Esophagus squamous epithelium (tissue), 5 donors: ENCODE measurements at regions of chr4 and their contacts with region 1.

Region 1: DNA sequence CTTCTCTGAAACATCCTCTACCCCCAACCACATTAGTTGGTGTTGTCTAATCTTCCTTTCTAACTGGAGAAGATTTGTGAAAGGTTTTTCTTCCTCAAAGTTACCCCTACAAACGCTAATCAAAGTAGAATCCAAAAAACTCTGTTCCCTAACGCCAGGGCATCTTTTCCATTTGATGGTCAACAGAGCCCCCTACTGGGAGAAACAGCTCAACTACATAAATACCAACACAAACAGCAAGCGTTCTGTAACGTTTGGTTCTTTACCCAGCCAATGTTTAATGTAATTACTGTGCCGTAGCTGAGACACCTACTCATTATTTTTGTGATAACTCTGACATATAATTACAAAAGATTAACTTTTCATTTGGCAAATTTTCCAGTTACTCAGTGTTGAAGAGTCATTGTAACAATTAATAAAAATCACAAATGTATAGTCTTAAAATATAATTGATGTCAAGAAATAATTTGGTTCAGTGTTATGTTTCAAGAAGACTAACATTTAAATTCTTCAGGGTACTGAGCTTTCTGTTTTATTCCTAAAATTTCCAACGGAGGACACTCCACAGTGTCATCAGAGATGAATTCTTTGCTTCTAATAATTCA is 94.9 kb upstream of the TBC1D9 start:
- DNase-seq: no peak
- H3K4me3 ChIP-seq: no peak overlapping the region
- H3K27ac ChIP-seq: no peak overlapping the region
- H3K4me1 ChIP-seq: peaks cover 3 to 26% (median 8%) of the 10 kb centered on the region in 3 donors
- H3K27me3 ChIP-seq: no peaks in the 10 kb centered on the region
- CTCF ChIP-seq: peak; percentile 52 to 89 (median 76)
- POLR2A ChIP-seq: no peak

Region 2: GRCh38 chr4:140523857-140524742 is 327.0 kb before region 1 on chr4 and contains the start of gene ELMOD2:
- intact Hi-C with region 1: loop called (anchors 10 kb)
- DNase-seq: peak; percentile 92
- H3K4me3 ChIP-seq: peak within 1 kb of the TSS; percentile 80 to 89 (median 84)
- H3K27ac ChIP-seq: peak within 1 kb of the TSS; percentile 83 to 91 (median 86)
- H3K4me1 ChIP-seq: peaks cover 0 to 23% (median 11%) of the 10 kb centered on the region in 3 donors
- H3K27me3 ChIP-seq: no peaks in the 10 kb centered on the region
- CTCF ChIP-seq: peak; percentile 84 to 94 (median 91)
- POLR2A ChIP-seq: peak in 2 of 4 donors; percentile 45 to 55
- total RNA-seq, gene ELMOD2: 11.2 to 36.9 (median 17.0) TPM

Region 3: DNA sequence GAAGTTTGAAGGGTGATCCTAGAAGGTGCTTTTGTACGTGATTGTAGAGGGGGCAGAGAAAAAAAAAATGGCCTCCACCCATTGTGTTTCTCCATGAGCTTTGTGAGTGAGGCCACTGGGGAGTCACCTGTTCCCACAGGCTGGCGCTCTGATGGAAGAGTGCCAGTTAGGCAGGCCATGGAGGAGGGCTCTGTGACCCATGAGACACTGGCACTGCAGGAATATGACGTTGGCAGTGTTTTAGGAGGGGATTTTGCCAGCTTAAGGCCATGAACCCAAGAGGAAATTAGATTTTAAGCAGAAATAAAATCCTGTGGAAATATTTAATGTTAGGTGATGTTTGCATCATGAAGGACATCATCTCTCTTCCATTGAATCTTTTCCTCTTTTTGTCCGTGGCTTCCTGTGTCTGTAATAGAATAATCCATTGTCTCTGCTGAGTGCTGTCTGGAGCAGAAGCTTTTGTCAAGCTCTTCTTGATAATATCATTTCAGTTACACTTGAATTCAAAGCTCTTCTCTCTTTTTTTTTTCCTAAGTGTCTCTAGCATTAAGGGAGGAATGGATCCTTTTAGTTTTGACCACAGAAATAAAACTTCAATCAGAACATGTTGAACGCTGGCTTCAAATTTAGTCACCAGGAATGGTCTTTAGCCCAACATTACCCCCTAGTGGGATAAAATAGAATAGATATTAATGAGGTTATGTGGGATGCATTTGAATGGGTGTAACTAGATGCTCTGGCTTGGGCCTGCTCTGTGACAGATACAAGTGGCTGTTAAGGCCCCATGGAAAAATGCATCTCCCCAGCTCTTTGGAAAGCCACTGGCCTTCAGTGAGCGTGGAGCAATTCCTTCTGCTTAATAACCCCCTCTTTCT is 241.3 kb before region 1 on chr4:
- intact Hi-C with region 1: loop called (anchors 10 kb)
- DNase-seq: no peak
- H3K4me3 ChIP-seq: no peak overlapping the region
- H3K27ac ChIP-seq: no peak overlapping the region
- H3K4me1 ChIP-seq: peaks cover 0 to 7% (median 0%) of the 10 kb centered on the region in 3 donors
- H3K27me3 ChIP-seq: no peaks in the 10 kb centered on the region
- CTCF ChIP-seq: peak in 5 of 6 experiments; percentile 11 to 63 (median 42)
- POLR2A ChIP-seq: no peak

Region 4: DNA sequence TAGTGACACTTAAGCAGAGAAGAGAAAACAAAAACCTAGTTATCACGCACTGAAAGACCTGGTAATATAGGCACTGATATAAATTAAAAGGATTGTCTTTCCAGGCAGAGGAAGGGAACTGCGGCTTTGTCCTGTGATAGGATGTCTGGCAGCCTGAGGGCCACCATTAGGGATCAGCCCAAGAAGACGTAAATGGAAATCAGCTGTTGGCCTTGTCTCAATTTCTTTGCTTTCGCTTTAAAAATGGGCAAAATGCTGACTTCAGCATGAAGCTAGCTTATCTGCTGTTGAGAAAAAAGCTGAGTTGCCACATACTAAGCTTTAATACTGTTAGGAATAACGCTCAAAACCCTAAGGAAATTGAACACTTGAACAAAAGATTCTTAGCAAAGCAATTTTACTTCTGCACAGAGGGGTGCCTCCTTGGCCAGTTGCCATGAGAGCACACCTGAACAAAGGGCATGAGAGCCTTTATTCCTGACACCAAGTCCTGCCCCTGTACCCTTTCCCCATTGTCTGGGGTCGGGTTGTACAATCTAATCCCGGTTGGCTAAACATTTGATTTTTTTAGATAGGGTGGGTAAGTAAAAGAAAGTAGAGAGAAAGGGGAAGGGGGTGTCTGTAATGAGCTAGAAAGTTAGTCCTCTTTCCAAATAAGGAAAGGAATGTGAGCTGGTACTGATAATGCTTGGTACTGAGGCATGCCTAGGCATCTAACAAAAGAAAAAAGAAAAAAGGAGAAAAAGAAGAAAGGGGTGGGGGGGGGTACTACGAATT is 197.2 kb before region 1 on chr4:
- intact Hi-C with region 1: no loop called
- DNase-seq: no peak
- H3K4me3 ChIP-seq: no peak overlapping the region
- H3K27ac ChIP-seq: no peak overlapping the region
- H3K4me1 ChIP-seq: peaks cover 0 to 3% (median 0%) of the 10 kb centered on the region in 3 donors
- H3K27me3 ChIP-seq: no peaks in the 10 kb centered on the region
- CTCF ChIP-seq: no peak
- POLR2A ChIP-seq: no peak